ENCODE measurements at regions of chr15 and their contacts with region 1.

Region 1: DNA sequence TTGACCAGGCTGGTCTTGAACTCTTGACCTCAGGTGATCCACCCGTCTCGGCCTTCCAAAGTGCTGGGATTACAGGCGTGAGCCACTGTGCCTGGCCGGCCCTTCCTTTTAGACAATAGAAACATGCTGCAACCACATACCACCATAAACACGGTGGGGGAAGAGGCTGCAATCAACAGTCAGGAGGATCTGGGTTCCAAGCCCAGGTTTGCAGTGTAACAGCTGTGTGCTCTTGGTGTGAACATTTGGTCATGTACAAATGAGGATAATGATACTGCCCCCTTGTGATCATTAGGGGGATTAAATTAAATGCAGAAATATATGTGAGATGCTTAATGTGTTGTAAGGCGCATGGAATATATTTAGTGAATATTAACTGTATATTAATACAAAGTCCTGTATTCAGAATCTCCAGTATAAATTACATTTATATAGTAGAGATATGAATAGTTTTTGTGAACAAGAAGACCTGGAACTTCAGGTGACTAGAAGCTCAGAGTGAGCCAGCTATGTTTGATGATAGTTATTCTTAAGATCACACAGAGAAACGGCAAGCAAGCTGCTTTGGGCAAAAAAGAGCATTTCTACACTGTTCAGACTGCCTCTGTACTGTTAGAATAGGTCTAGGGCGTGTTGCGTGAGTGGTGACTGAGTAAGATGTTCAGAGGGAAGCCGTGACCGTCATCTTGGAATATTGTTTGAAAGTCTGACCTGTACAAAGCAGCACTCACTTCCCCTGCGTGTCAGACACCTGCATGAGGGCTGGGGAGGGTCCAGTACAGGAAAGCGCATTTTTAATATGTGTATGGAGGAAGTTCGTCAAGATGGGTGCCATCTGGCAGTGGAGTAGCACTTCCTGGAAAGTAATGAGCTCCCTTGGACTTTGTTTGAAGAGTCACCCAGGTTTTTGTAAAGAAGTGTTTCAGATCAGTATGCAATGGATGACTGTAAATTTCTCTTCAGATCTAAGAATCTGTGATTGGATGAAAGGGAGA is 125.8 kb downstream of the PGPEP1L start:
- DNase-seq: peak; percentile 49
- H3K4me3 ChIP-seq: no peak overlapping the region
- H3K27ac ChIP-seq: no peak overlapping the region
- H3K4me1 ChIP-seq: peaks cover 2% of the 10 kb centered on the region
- H3K27me3 ChIP-seq: no peaks in the 10 kb centered on the region
- CTCF ChIP-seq: peak in 1 of 2 donors; percentile 41
- POLR2A ChIP-seq: no peak

Region 2: GRCh38 chr15:98658831-98659699 is 222.8 kb before region 1 on chr15:
- CTCF ChIA-PET with region 1: interaction called, 13 read pairs
- POLR2A ChIA-PET with region 1: no interaction called
- dilution Hi-C with region 1: loop called (anchors 25 kb)
- intact Hi-C with region 1: no loop called
- DNase-seq: peak; percentile 51
- H3K4me3 ChIP-seq: no peak overlapping the region
- H3K27ac ChIP-seq: no peak overlapping the region
- H3K4me1 ChIP-seq: peaks cover 23% of the 10 kb centered on the region
- H3K27me3 ChIP-seq: no peaks in the 10 kb centered on the region
- CTCF ChIP-seq: peak; percentile 75 to 81
- POLR2A ChIP-seq: no peak

Region 3: DNA sequence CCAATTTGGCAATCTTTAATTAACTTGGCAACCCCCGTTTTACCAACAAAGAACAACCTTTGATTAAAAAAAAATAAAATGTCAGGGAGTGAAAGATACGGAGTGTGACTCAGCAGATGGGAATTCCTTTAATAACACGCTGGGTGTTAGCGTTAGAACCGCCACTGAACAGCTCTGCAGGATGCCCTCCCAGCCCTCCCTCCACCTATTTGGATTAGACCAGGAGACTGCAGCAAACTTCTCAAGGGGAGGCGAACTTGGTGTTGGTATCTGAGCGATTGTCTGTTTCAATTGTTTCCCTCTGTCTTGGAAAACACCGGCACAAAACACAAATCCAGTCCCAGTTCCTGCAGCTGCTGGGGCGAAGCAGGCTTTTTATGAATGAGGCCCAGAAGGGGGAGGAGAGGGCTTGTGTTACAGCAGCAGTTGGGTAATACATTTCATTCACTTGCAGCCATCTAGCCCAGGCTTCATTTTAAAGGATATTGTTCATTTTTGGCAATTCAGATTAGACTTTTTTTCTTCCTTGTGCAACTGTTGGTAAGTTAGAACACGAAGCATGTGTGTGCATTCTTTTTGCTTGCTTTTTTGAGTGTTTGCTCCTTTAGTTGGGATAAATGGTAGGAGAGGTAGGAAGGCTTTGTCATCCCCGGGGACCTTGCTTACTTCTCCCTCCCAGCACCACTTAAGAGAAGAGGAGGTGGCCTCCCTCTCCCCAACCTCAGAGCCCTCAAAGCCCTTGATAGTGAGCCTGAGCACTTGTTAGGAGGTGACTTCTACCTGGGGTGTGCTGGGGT is 81.2 kb before region 1 on chr15:
- CTCF ChIA-PET with region 1: interaction called, 12 read pairs
- POLR2A ChIA-PET with region 1: no interaction called
- dilution Hi-C with region 1: no loop called
- intact Hi-C with region 1: no loop called
- DNase-seq: peak; percentile 98
- H3K4me3 ChIP-seq: peak overlapping the region in 1 of 3 experiments; percentile 6
- H3K27ac ChIP-seq: peak overlapping the region; percentile 80
- H3K4me1 ChIP-seq: peaks cover 42% of the 10 kb centered on the region
- H3K27me3 ChIP-seq: no peaks in the 10 kb centered on the region
- CTCF ChIP-seq: peak in 1 of 2 donors; percentile 1
- POLR2A ChIP-seq: no peak

Region 4: DNA sequence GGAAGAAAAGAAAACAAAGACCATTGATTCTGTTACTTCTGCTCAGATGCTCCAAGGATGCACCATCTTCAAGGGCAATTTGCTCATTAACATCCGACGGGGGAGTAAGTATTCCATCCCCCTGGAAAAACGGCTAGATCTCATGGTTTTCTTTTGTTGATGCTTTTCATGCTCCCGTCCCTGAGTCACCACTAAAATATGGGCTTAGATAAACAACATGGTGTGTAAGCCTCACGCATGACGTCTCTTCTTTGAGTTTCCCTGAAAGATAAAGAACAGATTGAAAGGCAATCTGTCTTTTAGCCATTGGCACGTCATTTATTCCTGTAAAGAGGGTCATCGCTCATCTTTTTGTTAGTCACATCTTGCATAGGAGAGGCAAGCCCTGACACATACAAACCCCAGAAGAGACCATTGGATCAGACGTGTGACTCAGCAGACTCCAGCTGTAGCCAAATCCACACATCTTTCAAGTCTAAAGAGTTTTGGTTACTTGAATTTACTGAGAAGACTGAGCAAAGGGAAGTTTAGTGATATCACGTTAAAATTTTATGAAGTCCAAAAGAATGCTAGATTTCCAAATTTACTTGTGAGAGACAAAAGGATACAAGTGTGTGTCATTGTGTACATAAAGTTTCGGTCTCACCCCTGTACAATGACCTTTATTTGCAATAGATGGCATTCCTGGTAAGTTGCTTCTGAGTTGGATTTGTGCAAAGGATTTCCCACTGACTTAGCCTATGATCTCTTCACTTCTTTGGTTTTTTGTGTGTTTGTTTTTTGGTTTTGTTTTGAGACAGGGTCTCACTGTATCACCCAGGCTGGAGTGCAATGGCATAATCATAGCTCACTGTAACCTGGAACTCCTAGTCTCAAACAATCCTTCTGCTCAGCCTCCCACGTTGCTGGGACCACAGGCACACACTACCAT is 15.2 kb after region 1 on chr15:
- CTCF ChIA-PET with region 1: interaction called, 11 read pairs
- POLR2A ChIA-PET with region 1: no interaction called
- dilution Hi-C with region 1: no loop called
- intact Hi-C with region 1: no loop called
- DNase-seq: peak; percentile 95
- H3K4me3 ChIP-seq: peak overlapping the region in 1 of 3 experiments; percentile 1
- H3K27ac ChIP-seq: peak overlapping the region; percentile 99
- H3K4me1 ChIP-seq: peaks cover 32% of the 10 kb centered on the region
- H3K27me3 ChIP-seq: no peaks in the 10 kb centered on the region
- CTCF ChIP-seq: no peak
- POLR2A ChIP-seq: no peak

Region 5: DNA sequence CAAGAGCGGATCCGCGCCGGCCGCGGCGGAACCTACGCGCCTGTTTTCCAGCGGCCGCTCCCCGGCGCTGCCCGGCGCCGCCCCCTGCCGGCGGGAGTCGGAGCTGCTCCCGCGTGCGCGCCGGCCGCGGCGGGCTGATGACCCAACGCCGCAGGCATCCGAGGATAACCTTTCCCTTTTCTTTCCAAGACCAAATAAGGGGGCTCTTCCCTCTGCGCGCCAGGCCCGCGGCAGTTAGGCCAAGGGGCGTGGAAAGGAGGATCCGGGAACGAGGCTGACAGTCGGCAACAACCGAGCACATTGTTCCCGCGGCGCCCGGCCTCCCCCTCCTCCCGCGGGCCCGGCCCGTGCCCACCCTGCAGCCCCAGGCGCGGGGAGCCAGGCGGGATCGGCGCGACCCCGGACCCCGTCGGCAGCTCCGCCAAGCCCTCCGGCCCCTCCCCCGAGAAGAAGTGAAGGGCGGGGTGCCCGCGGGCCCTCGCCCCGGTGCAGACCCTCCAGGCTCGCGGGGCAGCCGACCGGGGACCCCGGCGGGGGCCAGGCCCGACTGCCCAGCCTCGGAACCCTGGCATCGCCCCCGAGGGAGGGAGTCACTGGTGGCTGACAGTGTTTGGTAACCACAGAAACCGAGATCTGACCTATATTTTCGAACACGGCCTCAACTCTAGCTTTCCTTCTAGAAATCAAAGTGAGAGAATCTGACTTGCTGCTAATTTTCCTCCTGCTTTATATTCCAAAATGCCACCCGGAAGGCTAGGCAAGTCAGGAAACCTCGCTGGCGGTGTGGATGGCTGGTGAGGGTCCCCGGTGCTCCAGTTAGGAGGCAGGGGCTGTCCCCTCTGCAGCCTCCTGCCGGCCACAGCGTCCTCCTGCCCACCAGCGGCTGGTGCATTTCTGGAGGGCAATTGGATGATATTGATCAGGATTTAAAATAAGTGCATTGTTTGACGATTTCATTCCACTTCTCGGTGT is 177.5 kb after region 1 on chr15:
- CTCF ChIA-PET with region 1: interaction called, 14 read pairs
- POLR2A ChIA-PET with region 1: no interaction called
- dilution Hi-C with region 1: no loop called
- intact Hi-C with region 1: no loop called
- DNase-seq: peak; percentile 61
- H3K4me3 ChIP-seq: peak overlapping the region; percentile 34 to 60 (median 40)
- H3K27ac ChIP-seq: peak overlapping the region; percentile 12
- H3K4me1 ChIP-seq: peaks cover 8% of the 10 kb centered on the region
- H3K27me3 ChIP-seq: peaks cover 0 to 5% of the 10 kb centered on the region in 2 experiments
- CTCF ChIP-seq: peak; percentile 56 to 85
- POLR2A ChIP-seq: no peak

Measured in endothelial cell of umbilical vein (primary cell).